PC-3 (cell line): ENCODE measurements at regions of chr19 and their contacts with region 1.

Region 1: DNA sequence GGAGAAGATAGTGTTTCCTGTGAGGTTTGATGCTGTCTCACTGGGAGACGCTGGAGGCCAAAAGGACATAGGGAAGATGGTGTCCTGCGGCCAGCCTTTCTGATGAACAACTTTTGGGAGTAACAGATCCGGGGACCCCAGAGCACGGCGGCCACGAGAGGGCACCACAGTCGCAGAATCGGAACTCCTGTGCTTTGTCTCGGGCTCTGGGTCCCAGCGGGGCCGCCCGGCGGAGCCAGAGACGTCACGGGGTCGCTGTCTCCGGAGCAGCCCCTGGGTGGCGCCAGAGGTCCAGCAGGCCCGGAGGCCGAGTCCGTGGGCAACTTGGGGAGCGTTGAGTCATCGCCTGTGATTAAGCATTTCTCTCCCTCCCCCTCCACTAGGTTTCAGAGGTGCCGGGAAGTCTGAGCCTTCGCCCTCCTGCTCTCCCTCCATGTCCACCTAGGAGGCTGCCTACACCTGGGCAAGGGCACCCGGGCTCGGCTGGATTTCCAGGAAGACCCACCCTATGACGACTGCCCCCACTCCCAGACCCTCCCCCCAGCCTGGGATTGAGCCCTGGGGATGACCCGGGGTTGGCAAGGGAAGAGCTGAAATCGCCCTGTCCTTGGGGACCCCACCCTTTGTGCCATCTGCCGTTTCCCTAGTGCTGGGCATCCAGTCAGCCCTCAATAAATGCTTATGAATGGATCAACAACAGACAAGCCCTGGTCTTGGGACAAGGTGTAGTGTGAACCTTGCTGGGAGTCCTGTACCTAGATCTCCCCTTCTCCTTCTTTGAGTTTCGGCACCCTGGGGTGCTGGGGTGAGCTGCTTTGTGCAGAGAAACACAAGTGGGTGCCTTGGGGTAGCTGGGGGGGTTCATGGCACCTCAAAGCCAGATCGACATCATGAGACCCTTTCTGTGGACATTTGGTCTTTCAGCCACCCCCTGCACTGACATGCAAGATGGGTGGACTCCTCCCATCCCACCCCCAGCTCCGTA is 3.4 kb downstream of the NANOS3 start:
- DNase-seq: peak; percentile 99
- ATAC-seq: peak; percentile 89
- H3K4me3 ChIP-seq: peak overlapping the region; percentile 54
- H3K27ac ChIP-seq: peak overlapping the region; percentile 62
- H3K4me1 ChIP-seq: peaks cover 11% of the 10 kb centered on the region
- H3K27me3 ChIP-seq: no peaks in the 10 kb centered on the region
- CTCF ChIP-seq: peak; percentile 99

Region 2: DNA sequence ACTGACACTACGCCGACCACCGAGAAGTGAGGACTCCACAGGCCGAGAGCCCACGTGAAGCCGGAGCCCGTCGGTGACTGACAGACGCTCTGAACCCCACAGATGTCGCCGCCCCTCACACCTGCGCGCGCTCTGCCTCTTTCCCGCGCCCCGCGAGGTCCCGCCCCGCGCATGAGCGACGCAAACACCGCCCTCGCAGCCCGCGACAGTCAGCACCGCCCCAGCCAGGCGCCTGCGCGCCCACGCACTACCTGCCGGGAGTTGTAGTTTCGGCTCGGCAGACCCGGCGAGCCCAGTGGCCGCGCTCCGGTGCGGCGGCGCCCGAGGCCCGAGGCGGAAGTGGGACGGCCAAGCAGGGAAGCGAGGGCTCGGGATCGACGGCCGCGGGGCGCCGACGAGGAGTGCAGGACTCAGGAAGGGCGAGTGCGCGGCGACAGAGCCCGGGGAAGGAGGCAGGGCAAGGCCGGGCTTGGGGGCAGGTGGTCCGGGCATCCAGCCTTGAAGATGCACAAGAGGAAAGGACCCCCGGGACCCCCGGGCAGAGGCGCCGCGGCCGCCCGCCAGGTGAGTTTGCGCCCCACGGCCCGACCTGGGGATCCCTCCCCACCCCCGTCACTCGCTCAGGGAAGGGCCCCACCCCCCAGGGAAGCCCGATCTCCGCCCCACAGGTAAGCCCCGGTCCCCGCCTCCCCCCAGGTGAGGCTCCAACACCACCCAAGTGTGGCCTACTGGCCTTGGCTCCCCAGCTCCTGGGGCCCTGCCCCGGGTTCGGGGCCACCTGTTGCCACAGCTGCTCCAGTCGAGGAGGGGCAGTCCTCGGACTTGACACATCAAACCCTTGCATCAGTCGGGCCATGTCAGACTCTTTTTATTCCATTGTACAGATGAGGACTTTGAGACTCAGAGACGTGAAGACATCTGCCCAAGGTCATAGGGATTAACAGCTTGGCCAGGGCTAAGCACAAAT is 25.9 kb after region 1 on chr19 and contains the starts of genes BRME1 and CC2D1A:
- CTCF ChIA-PET with region 1: no interaction called
- POLR2A ChIA-PET with region 1: no interaction called
- intact Hi-C with region 1: loop called (anchors 2 kb)
- DNase-seq: peak; percentile 94
- ATAC-seq: peak; percentile 99
- H3K4me3 ChIP-seq: peak within 1 kb of the TSS; percentile 81
- H3K27ac ChIP-seq: no peak within 1 kb of the TSS
- H3K4me1 ChIP-seq: peaks cover 11% of the 10 kb centered on the region
- H3K27me3 ChIP-seq: no peaks in the 10 kb centered on the region
- CTCF ChIP-seq: no peak
- total RNA-seq, gene BRME1: 5.4 and 6.0 TPM in 2 replicates
- total RNA-seq, gene CC2D1A: 67.7 and 102 TPM in 2 replicates

Region 3: DNA sequence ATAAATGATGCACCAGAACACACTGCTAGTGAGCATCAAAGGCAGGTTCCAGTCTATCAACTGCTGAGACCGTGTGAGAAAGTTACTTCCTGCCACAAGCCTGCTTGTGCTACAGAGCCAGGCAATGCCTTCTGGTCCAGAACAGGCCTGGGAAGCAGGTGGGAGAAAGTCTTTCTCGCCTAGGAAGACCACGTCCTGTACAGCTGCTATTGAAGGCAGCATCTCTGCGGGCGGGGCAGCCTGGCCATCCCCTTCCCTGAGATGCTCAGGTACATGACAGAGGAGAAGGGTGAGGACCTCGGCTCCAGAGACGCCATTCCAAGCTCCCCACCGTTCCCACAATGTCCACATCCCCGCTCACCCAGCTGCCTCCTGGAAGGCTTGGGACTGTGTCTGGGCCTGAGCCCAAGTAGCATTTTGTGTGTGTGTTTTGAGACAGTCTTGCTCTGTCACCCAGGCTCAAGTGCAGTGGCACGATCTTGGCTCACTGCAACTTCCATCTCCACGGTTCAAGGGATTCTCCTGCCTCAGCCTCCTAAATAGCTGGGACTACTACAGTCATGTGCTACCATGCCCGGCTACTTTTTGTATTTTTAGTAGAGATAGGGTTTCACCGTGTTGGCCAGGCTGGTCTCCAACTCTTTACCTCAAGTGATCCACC is 122.3 kb after region 1 on chr19:
- CTCF ChIA-PET with region 1: no interaction called
- POLR2A ChIA-PET with region 1: no interaction called
- intact Hi-C with region 1: no loop called
- DNase-seq: no peak
- ATAC-seq: no peak
- H3K4me3 ChIP-seq: no peak overlapping the region
- H3K27ac ChIP-seq: no peak overlapping the region
- H3K4me1 ChIP-seq: peaks cover 8% of the 10 kb centered on the region; the same call in 1 of the 2 replicates
- H3K27me3 ChIP-seq: no peaks in the 10 kb centered on the region
- CTCF ChIP-seq: no peak